Activated CD8-positive, alpha-beta T cell treated with anti-CD3 and anti-CD28 coated beads, Interleukin-2, amount 10 ng/mL, durations not matched to agents 7 days and 5 days (primary cell): ENCODE measurements at regions of chr11 and their contacts with region 1.

Region 1: GRCh38 chr11:313787-314547 is at the start of gene IFITM1:
- DNase-seq: peak; percentile 90
- ATAC-seq: peak; percentile 45
- H3K4me3 Mint-ChIP-seq: peak within 1 kb of the TSS; percentile 87
- H3K27ac Mint-ChIP-seq: peak within 1 kb of the TSS; percentile 99
- H3K4me1 Mint-ChIP-seq: peaks cover 13% of the 10 kb centered on the region
- H3K27me3 Mint-ChIP-seq: no peaks in the 10 kb centered on the region
- total RNA-seq, gene IFITM1: 1,265 to 1,278 TPM

Region 2: DNA sequence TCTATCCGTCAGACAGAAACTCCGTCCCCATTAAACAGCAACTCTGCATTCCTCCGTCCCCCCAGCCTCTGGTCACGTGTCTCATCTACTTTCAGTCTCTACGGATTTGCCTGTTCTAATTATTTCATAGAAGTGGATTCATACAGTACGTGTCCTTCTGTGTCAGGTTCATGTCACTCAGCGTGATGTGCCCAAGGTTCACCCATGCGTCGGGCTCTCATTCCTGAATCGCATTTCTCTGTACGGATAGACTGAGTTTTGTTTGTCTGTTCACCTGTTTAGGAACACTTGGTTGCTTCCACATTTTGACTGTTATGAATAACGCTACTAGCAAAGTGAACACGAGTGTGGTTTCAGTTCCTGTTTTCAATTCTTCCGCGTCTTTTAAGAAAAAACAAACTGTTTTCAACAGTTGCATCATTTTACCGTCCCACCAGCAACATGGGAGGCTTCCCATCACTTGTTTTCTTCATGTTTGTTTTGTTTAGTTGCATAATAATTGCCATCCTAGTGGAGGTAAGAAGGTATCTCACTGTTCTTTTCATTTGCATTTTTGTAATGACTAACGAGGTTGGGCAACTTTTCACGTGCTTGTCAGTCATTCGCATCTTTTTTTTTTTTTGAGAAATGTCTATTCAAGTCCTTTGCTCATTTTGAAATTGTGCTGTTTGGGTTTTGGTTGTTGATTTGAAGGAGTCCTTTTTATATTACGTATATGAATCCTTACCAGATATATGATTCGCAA is 44.6 kb before region 1 on chr11:
- CTCF ChIA-PET with region 1: interaction called, 7 read pairs
- POLR2A ChIA-PET with region 1: interaction called, 34 read pairs
- DNase-seq: peak; percentile 69
- ATAC-seq: peak; percentile 47
- H3K4me3 Mint-ChIP-seq: peak overlapping the region; percentile 75
- H3K27ac Mint-ChIP-seq: peak overlapping the region; percentile 92
- H3K4me1 Mint-ChIP-seq: peaks cover 35% of the 10 kb centered on the region
- H3K27me3 Mint-ChIP-seq: peaks cover 2% of the 10 kb centered on the region

Region 3: GRCh38 chr11:288328-289144 is 25.4 kb before region 1 on chr11 and contains the start of gene PGGHG:
- CTCF ChIA-PET with region 1: interaction called, 8 read pairs
- POLR2A ChIA-PET with region 1: interaction called, 73 read pairs
- DNase-seq: peak; percentile 80
- ATAC-seq: peak; percentile 51
- H3K4me3 Mint-ChIP-seq: peak within 1 kb of the TSS; percentile 94
- H3K27ac Mint-ChIP-seq: peak within 1 kb of the TSS; percentile 97
- H3K4me1 Mint-ChIP-seq: peaks cover 61% of the 10 kb centered on the region
- H3K27me3 Mint-ChIP-seq: peaks cover 2% of the 10 kb centered on the region
- total RNA-seq, gene PGGHG: 487 to 541 TPM

Region 4: DNA sequence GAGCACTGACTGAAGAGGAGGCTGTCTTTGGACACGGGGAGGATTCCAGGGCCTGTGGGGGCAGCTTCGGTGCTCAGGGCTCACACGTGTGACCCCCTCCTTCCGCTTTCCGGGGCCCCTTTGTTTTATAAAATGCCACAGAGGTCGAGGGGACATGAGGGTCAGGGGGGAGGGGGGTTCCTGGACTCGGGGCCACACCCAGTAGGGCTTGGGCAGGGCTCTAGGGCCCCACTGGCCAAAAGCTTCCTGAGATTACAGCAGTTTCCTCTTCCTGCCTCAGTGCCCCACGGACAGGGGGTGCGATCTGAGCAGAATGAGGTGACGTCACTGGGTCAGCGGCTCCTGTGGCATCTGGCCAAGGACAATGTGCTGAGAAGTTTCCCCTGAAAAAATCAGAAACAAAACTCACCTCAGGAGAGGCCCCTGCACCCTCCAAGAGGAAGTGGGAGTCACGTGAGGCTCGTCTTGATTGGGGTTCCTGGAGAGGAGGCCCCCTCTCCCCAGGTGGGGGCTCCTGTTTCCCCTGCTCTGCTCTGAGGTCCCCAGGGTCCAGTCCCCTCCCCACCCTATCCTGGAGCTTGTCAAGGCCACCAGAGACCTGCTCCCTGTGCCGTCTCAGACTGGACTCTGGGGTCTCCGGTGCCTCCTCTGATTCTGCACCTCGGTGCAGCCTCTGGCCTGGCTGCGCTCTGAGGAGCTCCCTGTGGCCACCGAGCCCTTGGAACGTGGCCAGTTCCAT is 13.0 kb after region 1 on chr11:
- CTCF ChIA-PET with region 1: interaction called, 9 read pairs
- POLR2A ChIA-PET with region 1: interaction called, 30 read pairs
- DNase-seq: peak; percentile 85
- ATAC-seq: peak; percentile 63
- H3K4me3 Mint-ChIP-seq: peak overlapping the region; percentile 74
- H3K27ac Mint-ChIP-seq: peak overlapping the region; percentile 98
- H3K4me1 Mint-ChIP-seq: peaks cover 83% of the 10 kb centered on the region
- H3K27me3 Mint-ChIP-seq: no peaks in the 10 kb centered on the region

Region 5: GRCh38 chr11:346529-346928 is 32.6 kb after region 1 on chr11:
- CTCF ChIA-PET with region 1: no interaction called
- POLR2A ChIA-PET with region 1: no interaction called
- DNase-seq: no peak
- ATAC-seq: no peak
- H3K4me3 Mint-ChIP-seq: no peak overlapping the region
- H3K27ac Mint-ChIP-seq: no peak overlapping the region
- H3K4me1 Mint-ChIP-seq: peaks cover 24% of the 10 kb centered on the region
- H3K27me3 Mint-ChIP-seq: peaks cover 5% of the 10 kb centered on the region

Region 6: DNA sequence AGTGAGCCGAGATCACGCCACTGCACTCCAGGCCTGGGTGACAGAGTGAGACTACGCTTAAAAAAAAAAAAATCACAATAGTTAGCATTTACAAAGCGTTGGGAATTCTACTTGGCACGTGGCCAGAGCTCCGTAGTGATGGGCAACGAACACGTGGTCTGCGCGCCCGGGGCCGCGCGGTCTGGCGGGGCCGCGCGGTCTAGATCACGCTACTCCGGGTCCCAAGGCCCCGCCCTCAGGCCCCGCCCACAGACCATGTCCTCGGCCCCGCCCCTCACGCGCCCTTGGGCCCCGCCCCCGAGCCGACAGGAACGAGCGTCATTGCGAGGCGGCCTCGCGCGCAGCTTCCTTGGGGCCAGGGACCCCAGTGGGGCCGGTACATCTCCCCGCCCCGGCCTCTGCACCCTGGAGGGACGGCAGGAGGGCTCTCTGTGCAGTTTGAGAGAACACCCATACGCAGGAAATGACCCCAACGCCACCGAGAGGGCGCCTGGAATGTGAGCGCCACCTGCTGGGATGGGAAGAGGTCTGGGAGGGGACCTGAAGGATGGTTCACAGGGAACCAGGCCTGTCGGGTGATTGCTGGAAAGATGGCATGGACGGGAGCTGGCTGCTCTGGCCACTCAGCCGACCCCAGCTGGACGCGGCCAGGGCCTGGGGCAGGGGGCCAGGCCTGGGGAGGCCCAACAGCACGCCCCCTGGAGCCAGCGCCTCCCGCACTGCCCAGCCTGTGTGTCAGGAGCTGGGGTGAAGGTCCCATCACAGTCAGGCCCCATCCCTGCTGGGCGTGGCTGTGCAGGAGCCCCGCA is 134.2 kb after region 1 on chr11:
- CTCF ChIA-PET with region 1: interaction called, 12 read pairs
- POLR2A ChIA-PET with region 1: interaction called, 9 read pairs
- DNase-seq: peak; percentile 97
- ATAC-seq: peak; percentile 77
- H3K4me3 Mint-ChIP-seq: peak overlapping the region; percentile 83
- H3K27ac Mint-ChIP-seq: peak overlapping the region; percentile 97
- H3K4me1 Mint-ChIP-seq: peaks cover 28% of the 10 kb centered on the region
- H3K27me3 Mint-ChIP-seq: peaks cover 8% of the 10 kb centered on the region